ENCODE measurements at regions of chr16 and their contacts with region 1.

Region 1: GRCh38 chr16:89686520-89687091 is at the start of gene CDK10:
- DNase-seq: peak; percentile 96

Region 2: DNA sequence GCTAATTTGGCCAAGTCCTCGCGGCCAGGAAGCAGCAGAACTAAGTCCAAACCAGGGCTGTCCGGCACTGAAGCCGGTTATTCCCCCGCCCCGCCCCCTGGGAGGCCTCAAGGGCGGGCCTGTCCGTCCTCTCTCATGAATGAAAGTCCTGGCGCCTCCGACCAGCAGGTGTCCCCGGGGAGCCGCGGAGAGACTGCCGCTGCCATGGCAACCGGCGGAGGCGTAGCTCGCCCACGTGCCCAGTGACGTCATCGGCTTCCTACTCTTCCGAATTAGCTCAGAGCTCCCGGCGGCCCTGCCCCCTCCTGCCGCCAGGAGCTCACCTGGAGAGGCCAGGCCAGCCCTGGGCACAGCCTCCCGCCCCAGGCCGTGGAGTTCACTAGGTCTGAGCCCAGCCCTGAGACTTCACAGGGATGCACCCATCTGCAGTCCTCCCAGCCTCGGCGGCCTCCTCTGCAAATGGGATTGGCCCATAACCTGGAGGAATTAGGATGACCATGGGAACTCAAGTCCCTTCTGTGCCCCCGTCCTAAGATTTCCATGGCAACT is 13.6 kb after region 1 on chr16:
- CTCF ChIA-PET with region 1: no interaction called
- POLR2A ChIA-PET with region 1: interaction called, 16 read pairs
- DNase-seq: peak; percentile 95

Measured in HEK293T (cell line).